Tibial artery (tissue), 4 donors: ENCODE measurements at regions of chrX and their contacts with region 1.

Region 1: DNA sequence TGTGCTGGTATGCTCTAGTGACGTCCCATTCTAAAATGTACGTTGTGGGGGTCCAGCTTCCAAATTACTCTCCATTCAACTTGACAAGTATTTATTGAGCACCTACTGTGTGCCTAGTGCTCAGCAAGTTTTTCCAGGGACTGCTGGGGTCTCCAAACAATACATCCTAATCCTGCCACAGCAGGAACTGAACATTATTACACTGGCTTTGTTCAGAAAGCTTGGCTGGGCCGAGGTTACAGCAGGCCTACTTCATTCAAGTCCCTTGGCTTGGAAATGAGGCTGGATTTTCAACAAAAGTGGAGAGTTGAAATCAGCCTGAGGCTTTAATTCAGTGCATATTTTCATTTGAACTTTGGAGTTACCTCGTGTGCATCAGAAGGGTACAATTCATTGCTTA is 78.0 kb downstream of the GUCY2F start:
- DNase-seq: no peak
- H3K4me3 ChIP-seq: no peak overlapping the region
- H3K27ac ChIP-seq: no peak overlapping the region
- H3K4me1 ChIP-seq: no peaks in the 10 kb centered on the region
- H3K27me3 ChIP-seq: no peaks in the 10 kb centered on the region
- CTCF ChIP-seq: no peak

Region 2: DNA sequence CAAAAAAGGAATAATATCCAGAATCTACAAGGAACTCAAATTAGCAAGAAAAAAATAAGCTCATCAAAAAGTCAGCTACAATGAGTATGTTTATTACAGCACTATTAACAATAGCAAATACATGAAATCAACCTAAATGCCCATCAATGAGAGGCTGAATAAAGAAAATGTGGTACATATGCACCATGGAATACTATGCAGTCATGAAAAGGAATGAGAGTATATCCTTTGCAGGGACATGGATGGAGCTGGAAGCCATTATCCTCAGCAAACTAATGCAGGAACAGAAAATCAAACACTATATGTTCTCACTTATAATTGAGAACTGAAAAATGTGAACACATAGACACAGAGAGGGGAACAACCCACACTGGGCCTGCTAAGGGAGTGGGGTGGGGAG is 489.1 kb before region 1 on chrX:
- intact Hi-C with region 1: loop called (anchors 10 kb)
- DNase-seq: no peak
- H3K4me3 ChIP-seq: no peak overlapping the region
- H3K27ac ChIP-seq: no peak overlapping the region
- H3K4me1 ChIP-seq: no peaks in the 10 kb centered on the region
- H3K27me3 ChIP-seq: no peaks in the 10 kb centered on the region
- CTCF ChIP-seq: no peak

Region 3: GRCh38 chrX:109264878-109265277 is 139.0 kb before region 1 on chrX:
- intact Hi-C with region 1: no loop called
- DNase-seq: no peak
- H3K4me3 ChIP-seq: no peak overlapping the region
- H3K27ac ChIP-seq: no peak overlapping the region
- H3K4me1 ChIP-seq: no peaks in the 10 kb centered on the region
- H3K27me3 ChIP-seq: no peaks in the 10 kb centered on the region
- CTCF ChIP-seq: no peak